Mammary epithelial cell (primary cell): ENCODE measurements at regions of chrX and their contacts with region 1.

Region 1: GRCh38 chrX:46737473-46737872 is 21.4 kb downstream of the SLC9A7 start:
- DNase-seq: peak; percentile 51
- H3K4me3 ChIP-seq: no peak overlapping the region
- H3K27ac ChIP-seq: peak overlapping the region; percentile 42
- H3K4me1 ChIP-seq: peaks cover 4% of the 10 kb centered on the region
- H3K27me3 ChIP-seq: no peaks in the 10 kb centered on the region
- CTCF ChIP-seq: no peak

Region 2: DNA sequence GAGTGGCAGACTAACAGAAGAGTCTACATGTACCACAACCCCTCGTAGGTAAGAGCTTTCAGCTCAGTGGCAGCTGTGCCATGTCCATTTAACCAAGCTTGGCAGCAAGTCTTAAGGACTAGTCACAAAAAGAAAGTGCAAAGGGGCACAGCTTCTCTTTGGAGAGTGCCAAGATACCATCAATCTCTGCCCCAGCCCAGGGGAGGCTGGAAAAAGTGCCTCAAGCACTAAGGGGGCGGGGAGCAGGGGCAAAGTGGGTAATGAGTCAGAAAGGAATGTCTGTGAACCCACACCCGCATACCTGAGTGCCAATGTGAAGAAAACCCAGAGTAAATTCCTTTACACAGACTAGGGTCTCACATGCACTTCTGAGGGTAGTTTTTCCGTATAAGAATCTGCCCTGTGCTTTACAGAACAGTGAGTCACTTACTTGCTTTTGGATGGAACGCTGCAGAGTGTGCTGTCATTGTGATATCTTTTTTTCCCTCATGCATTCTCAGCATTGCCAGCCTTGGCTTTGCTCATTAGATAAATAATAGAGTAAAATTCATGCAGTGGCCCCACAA is 412.1 kb before region 1 on chrX:
- CTCF ChIA-PET with region 1: no interaction called
- dilution Hi-C with region 1: no loop called
- in situ Hi-C with region 1: no loop called
- intact Hi-C with region 1: no loop called
- DNase-seq: peak; percentile 92
- H3K4me3 ChIP-seq: no peak overlapping the region
- H3K27ac ChIP-seq: peak overlapping the region; percentile 98
- H3K4me1 ChIP-seq: peaks cover 42% of the 10 kb centered on the region
- H3K27me3 ChIP-seq: no peaks in the 10 kb centered on the region
- CTCF ChIP-seq: no peak

Region 3: GRCh38 chrX:46404774-46405173 is 332.7 kb before region 1 on chrX:
- CTCF ChIA-PET with region 1: no interaction called
- dilution Hi-C with region 1: no loop called
- in situ Hi-C with region 1: no loop called
- intact Hi-C with region 1: no loop called
- DNase-seq: no peak
- H3K4me3 ChIP-seq: no peak overlapping the region
- H3K27ac ChIP-seq: no peak overlapping the region
- H3K4me1 ChIP-seq: peaks cover 5% of the 10 kb centered on the region
- H3K27me3 ChIP-seq: no peaks in the 10 kb centered on the region
- CTCF ChIP-seq: no peak

Region 4: DNA sequence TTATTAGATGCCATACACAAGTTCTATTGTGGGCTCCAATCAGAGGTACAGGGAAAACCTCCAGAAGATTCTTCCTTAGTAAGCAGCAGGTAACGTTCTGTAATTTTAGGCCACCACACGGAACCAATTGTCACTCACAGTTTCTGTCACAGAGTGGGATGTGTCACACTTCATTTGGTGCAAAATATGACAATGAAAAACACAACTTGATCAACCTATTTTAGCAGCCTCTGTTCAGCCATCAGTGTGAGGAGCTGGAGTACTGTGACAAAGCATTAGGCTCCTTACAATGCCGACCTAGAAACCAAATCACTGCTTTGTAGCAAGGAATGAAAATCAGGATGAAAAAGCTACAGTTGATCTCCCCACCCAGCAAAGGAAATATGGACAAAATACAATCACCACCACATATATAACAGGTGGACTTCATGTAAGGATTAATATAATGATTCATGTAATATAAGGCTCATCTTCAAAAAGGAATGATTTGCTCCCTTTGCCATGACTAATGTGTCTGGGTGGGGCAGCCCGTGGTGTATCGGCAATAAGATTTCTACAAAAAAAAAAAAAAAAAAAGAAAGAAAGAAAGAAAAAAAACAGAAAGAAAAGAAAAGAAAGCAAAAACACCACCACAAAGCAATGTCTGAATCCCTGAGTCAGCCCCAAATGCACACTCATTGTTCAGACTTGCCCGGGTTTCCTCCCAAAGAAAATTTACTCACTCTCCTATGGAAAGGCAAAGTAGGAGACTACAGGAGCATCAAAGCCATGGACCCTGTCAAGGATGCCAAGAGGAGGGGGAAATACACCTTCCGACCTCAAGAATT is 14.5 kb before region 1 on chrX:
- CTCF ChIA-PET with region 1: no interaction called
- dilution Hi-C with region 1: no loop called
- in situ Hi-C with region 1: no loop called
- intact Hi-C with region 1: loop called (anchors 1 kb)
- DNase-seq: peak; percentile 73
- H3K4me3 ChIP-seq: peak overlapping the region in 1 of 3 experiments; percentile 4
- H3K27ac ChIP-seq: peak overlapping the region; percentile 5
- H3K4me1 ChIP-seq: peaks cover 9% of the 10 kb centered on the region
- H3K27me3 ChIP-seq: no peaks in the 10 kb centered on the region
- CTCF ChIP-seq: no peak